ENCODE measurements at regions of chr22 and their contacts with region 1.

Region 1: GRCh38 chr22:22959147-22959827 is 71.7 kb downstream of the IGLL5 start:
- DNase-seq: peak; percentile 36
- H3K4me3 ChIP-seq: no peak overlapping the region
- H3K27ac ChIP-seq: no peak overlapping the region
- H3K27me3 ChIP-seq: peaks cover 8% of the 10 kb centered on the region
- CTCF ChIP-seq: peak; percentile 90

Region 2: DNA sequence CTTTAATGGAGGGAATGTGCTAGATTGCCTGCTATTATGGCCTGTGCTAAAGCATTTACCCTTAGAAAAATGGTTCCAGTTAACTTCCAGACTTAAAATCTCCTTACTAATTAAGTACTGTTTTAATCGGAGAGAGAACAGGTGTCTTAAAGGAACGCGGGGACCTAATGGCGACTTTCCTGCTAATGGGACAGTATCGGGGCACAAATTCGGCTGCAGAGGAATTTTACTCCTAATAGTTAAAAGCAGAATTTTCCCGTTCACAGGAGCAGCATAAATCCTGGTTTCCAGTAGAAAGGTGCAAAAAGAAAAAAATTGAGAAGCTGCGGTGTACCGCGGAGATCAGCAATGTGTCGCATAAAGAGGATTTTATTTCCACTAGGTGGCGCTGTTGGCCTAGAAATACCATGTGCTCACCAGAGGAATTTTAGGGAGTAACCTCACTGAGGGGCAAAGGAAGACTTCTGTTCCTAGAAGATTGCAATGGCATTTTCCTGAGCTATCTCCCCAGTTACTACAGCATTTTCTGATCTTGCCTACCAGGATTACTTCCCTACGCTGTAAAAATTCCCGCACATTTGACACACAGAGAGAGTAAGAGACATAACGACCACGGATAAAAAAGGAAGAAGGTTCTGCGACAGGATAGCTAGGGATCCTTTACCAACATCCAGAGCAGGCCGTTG is 495.3 kb before region 1 on chr22:
- CTCF ChIA-PET with region 1: interaction called, 39 read pairs
- POLR2A ChIA-PET with region 1: no interaction called
- DNase-seq: peak; percentile 34
- H3K4me3 ChIP-seq: no peak overlapping the region
- H3K27ac ChIP-seq: no peak overlapping the region
- H3K27me3 ChIP-seq: peaks cover 8% of the 10 kb centered on the region
- CTCF ChIP-seq: peak; percentile 76

Region 3: DNA sequence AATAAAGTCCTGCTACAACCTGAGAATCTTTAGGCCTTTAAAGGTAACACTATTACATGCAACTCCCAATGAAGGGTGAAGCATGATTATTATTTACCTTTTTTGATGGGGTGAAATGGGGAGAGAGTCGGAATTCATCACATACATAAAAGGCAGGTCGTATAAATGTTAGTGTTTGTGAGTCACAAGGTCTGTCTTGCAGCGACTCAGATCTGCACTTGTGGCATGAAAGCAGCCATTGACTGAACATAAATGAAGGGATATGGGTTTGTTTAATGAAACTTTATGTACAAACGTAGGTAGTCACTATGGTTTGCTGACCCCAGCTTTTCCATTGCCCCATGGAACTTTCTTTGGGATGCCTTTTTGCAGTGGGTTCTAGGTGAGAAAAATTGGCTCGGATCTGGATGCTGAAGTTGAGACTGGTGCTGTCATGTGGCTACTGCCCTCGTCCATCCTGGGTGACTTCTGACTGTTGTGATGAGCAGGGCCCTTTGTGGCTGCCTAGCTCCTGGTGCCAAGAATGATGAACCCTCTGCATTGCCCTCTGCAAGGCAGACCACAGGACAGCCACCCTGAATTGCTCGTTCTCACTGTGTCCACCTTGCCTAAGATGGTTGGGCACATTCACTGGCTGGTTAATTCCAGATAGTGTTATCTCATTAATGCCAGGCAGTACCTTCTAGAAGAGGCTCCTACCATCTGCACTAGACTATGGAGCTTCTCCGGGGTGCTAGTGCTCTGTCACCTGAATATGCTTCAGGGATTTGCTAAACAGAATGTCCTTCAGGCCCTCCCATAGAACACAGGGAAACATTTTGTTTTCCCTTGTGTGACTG is 303.6 kb before region 1 on chr22:
- CTCF ChIA-PET with region 1: no interaction called
- POLR2A ChIA-PET with region 1: no interaction called
- DNase-seq: no peak
- H3K4me3 ChIP-seq: no peak overlapping the region
- H3K27ac ChIP-seq: no peak overlapping the region
- H3K27me3 ChIP-seq: peaks cover 7% of the 10 kb centered on the region
- CTCF ChIP-seq: no peak

Region 4: GRCh38 chr22:22848364-22848866 is 110.9 kb before region 1 on chr22:
- CTCF ChIA-PET with region 1: interaction called, 46 read pairs
- POLR2A ChIA-PET with region 1: no interaction called
- DNase-seq: no peak
- H3K4me3 ChIP-seq: no peak overlapping the region
- H3K27ac ChIP-seq: no peak overlapping the region
- H3K27me3 ChIP-seq: peaks cover 5% of the 10 kb centered on the region
- CTCF ChIP-seq: peak; percentile 89

Region 5: GRCh38 chr22:22986008-22986407 is 26.7 kb after region 1 on chr22:
- CTCF ChIA-PET with region 1: no interaction called
- POLR2A ChIA-PET with region 1: no interaction called
- DNase-seq: no peak
- H3K4me3 ChIP-seq: no peak overlapping the region
- H3K27ac ChIP-seq: no peak overlapping the region
- H3K27me3 ChIP-seq: no peaks in the 10 kb centered on the region
- CTCF ChIP-seq: no peak

Region 6: GRCh38 chr22:23119494-23120414 is 160.5 kb after region 1 on chr22:
- CTCF ChIA-PET with region 1: interaction called, 304 read pairs
- POLR2A ChIA-PET with region 1: no interaction called
- DNase-seq: no peak
- H3K4me3 ChIP-seq: no peak overlapping the region
- H3K27ac ChIP-seq: no peak overlapping the region
- H3K27me3 ChIP-seq: no peaks in the 10 kb centered on the region
- CTCF ChIP-seq: no peak

Region 7: DNA sequence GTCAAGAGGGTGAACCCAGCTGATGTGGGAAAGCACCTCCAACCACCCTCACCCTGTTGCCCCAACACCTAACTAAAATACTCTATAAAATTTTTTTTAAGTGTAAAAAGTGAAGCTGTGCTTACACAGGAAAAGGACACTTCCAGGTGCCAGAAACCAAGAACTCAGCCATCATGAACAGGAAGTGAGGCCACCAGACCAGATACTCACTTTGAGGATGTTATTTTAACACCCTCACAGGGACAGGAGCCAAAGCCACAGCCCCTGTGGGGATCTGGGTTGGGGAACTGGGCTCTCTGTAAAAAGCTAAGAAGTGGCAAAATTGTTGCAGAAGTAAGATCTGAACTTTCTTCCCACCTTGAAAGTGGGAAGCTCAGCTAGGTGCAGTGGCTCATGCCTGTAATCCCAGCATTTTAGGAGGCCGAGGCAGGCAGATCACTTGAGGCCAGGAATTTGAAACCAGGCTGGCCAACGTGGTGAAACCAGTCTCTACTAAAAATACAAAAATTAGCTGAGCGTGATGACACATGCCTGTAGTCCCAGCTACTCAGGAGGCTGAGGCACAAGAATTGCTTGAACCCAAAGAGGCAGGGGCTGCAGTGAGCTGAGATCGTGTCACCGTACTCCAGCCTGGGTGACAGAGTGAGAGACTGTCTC is 178.7 kb after region 1 on chr22:
- CTCF ChIA-PET with region 1: interaction called, 304 read pairs
- POLR2A ChIA-PET with region 1: no interaction called
- DNase-seq: no peak
- H3K4me3 ChIP-seq: no peak overlapping the region
- H3K27ac ChIP-seq: no peak overlapping the region
- H3K27me3 ChIP-seq: no peaks in the 10 kb centered on the region
- CTCF ChIP-seq: no peak

Region 8: GRCh38 chr22:23385291-23386244 is 426.3 kb after region 1 on chr22:
- CTCF ChIA-PET with region 1: interaction called, 14 read pairs
- POLR2A ChIA-PET with region 1: no interaction called
- DNase-seq: peak; percentile 61
- H3K4me3 ChIP-seq: no peak overlapping the region
- H3K27ac ChIP-seq: no peak overlapping the region
- H3K27me3 ChIP-seq: no peaks in the 10 kb centered on the region
- CTCF ChIP-seq: peak; percentile 97